ENCODE measurements at regions of chr10 and their contacts with region 1.

Region 1: GRCh38 chr10:28663576-28664313 is 13.6 kb upstream of the BAMBI start:
- DNase-seq: peak; percentile 69

Region 2: GRCh38 chr10:28280652-28281051 is 383.1 kb before region 1 on chr10:
- CTCF ChIA-PET with region 1: no interaction called
- POLR2A ChIA-PET with region 1: no interaction called
- DNase-seq: no peak

Region 3: DNA sequence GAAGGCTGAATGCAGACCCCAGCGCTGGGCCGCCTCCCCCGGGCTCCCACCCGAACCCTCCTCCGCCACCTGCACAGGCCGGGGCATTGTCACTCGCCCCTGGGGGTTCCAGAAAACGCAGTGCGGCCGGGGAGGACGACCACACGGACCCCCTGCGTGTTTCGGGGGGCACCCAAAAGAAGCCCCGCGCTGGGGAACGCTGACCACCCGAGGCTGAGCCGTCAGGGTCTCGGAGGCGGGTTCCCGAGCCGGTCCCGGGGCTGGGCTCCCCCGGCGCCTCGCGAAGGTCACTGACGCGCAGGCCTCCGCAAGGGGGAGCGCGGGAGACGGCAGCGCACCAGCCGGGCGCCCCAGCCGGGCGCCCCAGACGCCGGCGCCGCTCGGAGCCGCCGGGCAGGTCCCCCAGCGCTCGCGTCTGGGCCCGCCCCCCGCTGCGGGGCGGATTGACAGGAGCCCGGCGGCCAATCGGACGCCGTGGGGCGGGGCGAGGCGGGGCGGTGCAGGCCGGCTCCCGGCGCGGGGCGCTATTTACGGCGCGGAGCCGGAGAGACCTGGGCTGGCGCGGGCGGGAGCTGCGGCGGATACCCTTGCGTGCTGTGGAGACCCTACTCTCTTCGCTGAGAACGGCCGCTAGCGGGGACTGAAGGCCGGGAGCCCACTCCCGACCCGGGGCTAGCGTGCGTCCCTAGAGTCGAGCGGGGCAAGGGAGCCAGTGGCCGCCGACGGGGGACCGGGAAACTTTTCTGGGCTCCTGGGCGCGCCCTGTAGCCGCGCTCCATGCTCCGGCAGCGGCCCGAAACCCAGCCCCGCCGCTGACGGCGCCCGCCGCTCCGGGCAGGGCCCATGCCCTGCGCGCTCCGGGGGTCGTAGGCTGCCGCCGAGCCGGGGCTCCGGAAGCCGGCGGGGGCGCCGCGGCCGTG is 13.5 kb after region 1 on chr10 and contains the start of gene BAMBI:
- CTCF ChIA-PET with region 1: interaction called, 5 read pairs
- POLR2A ChIA-PET with region 1: interaction called, 18 read pairs
- DNase-seq: peak; percentile 81

Region 4: DNA sequence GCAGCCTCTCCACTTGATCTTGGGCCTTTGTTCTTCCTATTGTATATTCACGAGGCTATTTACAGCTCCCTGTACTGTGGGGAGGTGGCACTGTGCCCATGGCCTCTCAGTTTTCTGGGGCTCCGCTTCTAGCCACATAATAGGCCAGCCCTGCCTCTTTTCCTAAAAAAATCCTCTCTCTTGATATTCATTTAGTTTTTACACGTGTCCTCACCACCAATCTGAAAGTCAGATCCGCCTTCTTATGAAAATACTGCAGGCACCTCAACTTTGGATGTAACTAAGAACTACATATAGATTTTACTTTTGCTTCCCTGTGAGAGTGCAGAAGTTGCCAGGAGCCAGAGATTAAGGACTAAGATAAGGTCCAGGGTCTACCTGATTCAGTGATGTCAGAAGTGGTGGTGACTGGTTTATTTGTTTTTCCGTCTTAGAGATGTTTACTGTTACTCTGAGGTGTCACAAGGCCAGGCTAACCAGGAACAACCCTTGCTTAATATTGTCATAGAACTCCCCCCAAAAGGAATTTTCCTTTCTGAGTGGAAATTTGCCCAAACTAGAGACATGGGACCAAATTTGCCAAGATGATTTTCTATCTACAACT is 21.3 kb after region 1 on chr10:
- CTCF ChIA-PET with region 1: interaction called, 4 read pairs
- POLR2A ChIA-PET with region 1: interaction called, 10 read pairs
- DNase-seq: no peak

Region 5: GRCh38 chr10:28991326-28992270 is 327.9 kb after region 1 on chr10:
- CTCF ChIA-PET with region 1: interaction called, 28 read pairs
- POLR2A ChIA-PET with region 1: no interaction called
- DNase-seq: peak; percentile 53